H1 (cell line): ENCODE measurements at regions of chr10 and their contacts with region 1.

Region 1: DNA sequence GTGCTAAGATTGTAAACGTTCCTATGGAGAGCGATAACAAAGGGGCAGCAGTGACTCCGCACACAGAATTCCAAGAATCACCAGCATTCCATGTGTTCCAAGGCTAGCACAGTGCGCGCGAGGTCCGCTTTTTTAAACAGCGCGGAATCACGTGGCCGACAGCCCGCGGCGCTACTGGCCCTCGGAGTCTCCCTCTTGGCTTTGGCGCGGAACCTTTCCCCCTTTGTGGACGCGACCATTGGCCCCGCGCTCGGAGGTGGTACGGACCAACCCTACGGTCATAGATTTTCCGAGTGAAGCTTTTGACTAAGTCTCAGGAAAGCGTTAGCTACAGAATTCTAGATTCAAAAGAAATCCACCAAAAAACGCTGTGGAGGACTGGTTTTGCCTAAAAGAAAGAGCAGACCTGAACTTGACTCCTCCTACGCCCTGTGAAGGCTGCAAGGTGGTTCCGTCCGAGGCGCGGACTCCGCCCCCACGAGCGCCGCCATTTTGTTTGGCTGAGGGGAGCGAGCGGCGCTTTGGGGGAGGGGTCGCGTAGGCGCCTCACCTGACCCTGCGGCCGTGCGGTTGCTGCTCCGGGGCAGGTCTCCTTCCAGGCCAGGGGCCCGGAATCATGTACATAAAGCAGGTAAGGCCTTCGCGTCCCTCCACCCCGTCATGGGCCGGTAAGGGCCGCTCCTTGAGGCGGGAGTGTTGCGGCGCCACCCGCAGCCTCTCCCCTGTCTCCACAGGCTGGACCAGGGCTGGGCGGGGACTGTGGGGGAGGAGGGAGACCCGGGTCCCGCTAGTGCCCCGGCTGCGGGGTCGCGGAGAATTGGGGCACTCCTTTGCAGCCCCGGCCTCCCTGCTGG is at the start of gene SMC3:
- DNase-seq: peak; percentile 87 to 96
- H3K4me3 ChIP-seq: peak within 1 kb of the TSS; percentile 88 to 95 (median 91)
- H3K27ac ChIP-seq: peak within 1 kb of the TSS; percentile 98
- H3K4me1 ChIP-seq: peaks cover 0 to 4% (median 0%) of the 10 kb centered on the region in 4 experiments; a peak in 2 of 7 replicates
- H3K27me3 ChIP-seq: no peaks in the 10 kb centered on the region
- CTCF ChIP-seq: no peak
- EP300 ChIP-seq: peak; percentile 17 to 98
- POLR2A ChIP-seq: peak in 1 of 2 experiments; percentile 87; a peak in 2 of 3 replicates
- RAD21 ChIP-seq: no peak; a peak in 1 of 4 replicates
- total RNA-seq, gene SMC3: 89.8 and 93.4 TPM in 2 replicates

Region 2: DNA sequence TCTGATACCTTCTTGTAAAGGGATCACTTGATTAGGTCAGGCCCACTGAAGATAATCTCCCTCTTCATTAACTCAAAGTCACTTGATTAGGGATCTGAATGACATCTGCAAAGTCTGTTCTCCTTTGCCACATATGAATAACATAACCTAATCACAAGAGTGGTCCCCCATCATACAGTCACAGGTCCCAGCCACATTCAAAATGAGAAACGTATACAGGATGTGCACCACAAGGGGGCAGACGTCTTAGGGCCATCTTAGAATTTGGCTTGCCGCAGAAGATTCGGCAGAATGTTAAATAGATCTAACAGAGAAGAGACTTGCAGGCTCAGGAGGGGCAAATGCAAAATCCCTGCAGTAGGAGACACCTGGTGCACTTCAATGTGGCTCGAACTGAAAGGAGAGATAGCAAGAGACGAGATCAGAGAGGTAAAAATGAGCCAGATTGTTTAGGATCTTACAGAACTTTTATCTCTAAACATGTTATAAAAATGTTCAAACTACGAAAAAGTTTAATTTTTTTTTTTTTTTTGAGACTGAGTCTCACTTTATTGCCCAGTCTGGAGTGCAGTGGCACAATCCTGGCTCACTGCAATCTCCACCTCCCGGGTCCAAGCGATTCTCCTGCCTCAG is 10.3 kb before region 1 on chr10:
- CTCF ChIA-PET with region 1: interaction called, 4 read pairs
- POLR2A ChIA-PET with region 1: interaction called, 14 read pairs
- DNase-seq: peak in 1 of 2 experiments; percentile 70
- H3K4me3 ChIP-seq: no peak overlapping the region
- H3K27ac ChIP-seq: no peak overlapping the region
- H3K4me1 ChIP-seq: peaks cover 0 to 7% (median 1%) of the 10 kb centered on the region in 4 experiments; a peak in 4 of 7 replicates
- H3K27me3 ChIP-seq: no peaks in the 10 kb centered on the region
- CTCF ChIP-seq: peak; percentile 43 to 85 (median 61)
- EP300 ChIP-seq: no peak
- POLR2A ChIP-seq: no peak
- RAD21 ChIP-seq: peak; percentile 51 to 64

Region 3: GRCh38 chr10:110600487-110601101 is 33.2 kb after region 1 on chr10:
- CTCF ChIA-PET with region 1: interaction called, 8 read pairs
- POLR2A ChIA-PET with region 1: interaction called, 16 read pairs
- DNase-seq: peak in 1 of 2 experiments; percentile 27
- H3K4me3 ChIP-seq: no peak overlapping the region
- H3K27ac ChIP-seq: no peak overlapping the region
- H3K4me1 ChIP-seq: no peaks in the 10 kb centered on the region
- H3K27me3 ChIP-seq: no peaks in the 10 kb centered on the region
- CTCF ChIP-seq: peak in 2 of 3 experiments; percentile 50 to 51; a peak in 3 of 4 replicates
- EP300 ChIP-seq: no peak
- POLR2A ChIP-seq: no peak
- RAD21 ChIP-seq: peak; percentile 51 to 54

Region 4: DNA sequence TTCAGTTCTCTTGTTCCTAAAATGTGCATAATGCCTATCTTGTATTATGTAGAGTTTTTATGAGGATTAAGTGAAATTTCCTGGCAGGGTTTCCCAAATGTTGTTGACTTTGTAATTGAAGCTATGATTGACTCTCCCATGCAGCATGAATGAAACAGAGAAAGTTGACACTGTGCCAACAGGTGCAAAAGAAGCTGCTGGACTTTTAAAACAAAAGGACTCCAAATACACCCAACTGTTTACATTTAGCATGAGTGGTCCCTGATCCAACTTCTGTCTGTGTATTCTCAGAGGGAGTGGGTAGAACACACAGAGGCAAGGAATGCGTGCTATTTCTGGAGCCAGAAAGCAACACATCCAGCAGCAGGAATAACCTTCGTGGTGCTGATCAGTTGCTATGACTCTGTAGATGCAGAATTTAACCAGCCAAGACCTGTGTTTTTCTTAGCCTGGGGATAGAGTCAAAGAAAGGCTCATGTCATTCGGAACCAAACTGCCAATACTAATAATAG is 62.3 kb after region 1 on chr10:
- CTCF ChIA-PET with region 1: no interaction called
- POLR2A ChIA-PET with region 1: no interaction called
- DNase-seq: no peak
- H3K4me3 ChIP-seq: no peak overlapping the region
- H3K27ac ChIP-seq: no peak overlapping the region
- H3K4me1 ChIP-seq: peaks cover 0 to 6% (median 1%) of the 10 kb centered on the region in 4 experiments; a peak in 2 of 7 replicates
- H3K27me3 ChIP-seq: no peaks in the 10 kb centered on the region
- CTCF ChIP-seq: no peak
- EP300 ChIP-seq: no peak
- POLR2A ChIP-seq: no peak
- RAD21 ChIP-seq: no peak

Region 5: GRCh38 chr10:110774069-110775019 is 206.9 kb after region 1 on chr10:
- CTCF ChIA-PET with region 1: no interaction called
- POLR2A ChIA-PET with region 1: no interaction called
- DNase-seq: no peak
- H3K4me3 ChIP-seq: no peak overlapping the region
- H3K27ac ChIP-seq: no peak overlapping the region
- H3K4me1 ChIP-seq: no peaks in the 10 kb centered on the region; a peak in 1 of 7 replicates
- H3K27me3 ChIP-seq: no peaks in the 10 kb centered on the region
- CTCF ChIP-seq: no peak
- EP300 ChIP-seq: no peak
- POLR2A ChIP-seq: no peak
- RAD21 ChIP-seq: no peak